ENCODE measurements at regions of chr19 and their contacts with region 1.

Region 1: GRCh38 chr19:14136509-14137281 is at the start of gene ASF1B:
- DNase-seq: peak; percentile 99
- ATAC-seq: peak; percentile 88
- H3K4me3 Mint-ChIP-seq: peak within 1 kb of the TSS; percentile 88
- H3K27ac Mint-ChIP-seq: peak within 1 kb of the TSS; percentile 93
- H3K4me1 Mint-ChIP-seq: peaks cover 43% of the 10 kb centered on the region
- H3K27me3 Mint-ChIP-seq: no peaks in the 10 kb centered on the region
- total RNA-seq, gene ASF1B: 64.6 to 70.4 TPM

Region 2: DNA sequence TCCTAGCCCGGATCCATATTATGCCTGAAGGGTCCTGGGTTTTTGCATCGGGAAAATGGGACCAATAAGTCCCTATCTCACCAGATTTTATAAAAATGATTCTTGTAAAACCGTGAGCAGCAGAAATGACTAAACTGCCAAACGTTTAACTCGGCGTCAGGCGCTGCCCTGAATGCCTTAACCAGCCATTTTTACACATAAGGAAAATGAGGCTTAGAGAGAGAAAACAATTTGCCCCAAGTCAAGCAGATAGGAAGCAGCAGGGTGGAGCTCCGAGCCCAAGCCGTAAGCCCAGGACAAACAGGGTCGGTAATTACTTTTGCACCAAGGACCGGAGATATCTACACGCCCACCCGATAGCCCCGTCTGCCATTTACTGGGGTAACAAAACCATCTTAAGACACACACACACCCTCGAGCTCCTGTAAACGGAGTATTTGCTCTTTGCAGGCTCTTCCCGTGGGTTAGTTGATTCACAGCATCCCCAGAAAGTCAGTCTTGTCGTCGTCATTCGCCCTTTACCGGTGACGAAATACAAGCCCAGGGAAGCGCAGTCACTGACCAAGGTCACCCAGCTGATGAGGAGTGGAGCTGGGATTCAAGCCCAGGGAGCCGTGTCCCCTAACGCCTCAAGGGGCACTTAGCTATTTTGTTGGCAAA is 388.4 kb before region 1 on chr19:
- CTCF ChIA-PET with region 1: interaction called, 5 read pairs
- POLR2A ChIA-PET with region 1: no interaction called
- intact Hi-C with region 1: loop called in 1 of 2 experiments (anchors 1 kb)
- DNase-seq: peak; percentile 50
- ATAC-seq: peak; percentile 2
- H3K4me3 Mint-ChIP-seq: peak overlapping the region; percentile 80
- H3K27ac Mint-ChIP-seq: peak overlapping the region; percentile 84
- H3K4me1 Mint-ChIP-seq: peaks cover 30% of the 10 kb centered on the region
- H3K27me3 Mint-ChIP-seq: no peaks in the 10 kb centered on the region

Region 3: DNA sequence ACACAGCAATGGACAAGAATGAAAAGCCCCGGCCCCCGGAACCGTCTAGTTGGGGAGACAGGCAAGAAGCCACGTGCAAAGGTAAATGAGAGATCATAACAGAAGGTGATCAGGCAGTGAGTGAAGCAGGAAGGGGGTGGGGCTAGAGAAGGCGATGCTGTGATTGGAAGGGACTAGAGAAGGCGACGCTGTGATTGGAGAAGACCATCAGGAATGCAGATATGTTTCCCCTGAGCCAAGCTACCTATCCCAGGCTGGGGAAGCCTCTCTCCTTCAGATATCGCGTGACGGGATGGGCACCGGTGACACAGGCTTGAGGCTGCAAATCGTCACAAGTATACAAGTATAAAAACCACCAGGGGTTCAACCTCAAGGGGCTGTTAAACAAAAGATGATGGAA is 162.6 kb before region 1 on chr19:
- CTCF ChIA-PET with region 1: no interaction called
- POLR2A ChIA-PET with region 1: no interaction called
- intact Hi-C with region 1: no loop called
- DNase-seq: peak; percentile 66
- ATAC-seq: peak; percentile 83
- H3K4me3 Mint-ChIP-seq: no peak overlapping the region
- H3K27ac Mint-ChIP-seq: peak overlapping the region; percentile 38
- H3K4me1 Mint-ChIP-seq: peaks cover 10% of the 10 kb centered on the region
- H3K27me3 Mint-ChIP-seq: no peaks in the 10 kb centered on the region

Region 4: GRCh38 chr19:13986348-13986904 is 150.3 kb before region 1 on chr19:
- CTCF ChIA-PET with region 1: no interaction called
- POLR2A ChIA-PET with region 1: no interaction called
- intact Hi-C with region 1: loop called in 1 of 2 experiments (anchors 1 kb)
- DNase-seq: peak; percentile 100
- ATAC-seq: peak; percentile 92
- H3K4me3 Mint-ChIP-seq: peak overlapping the region; percentile 63
- H3K27ac Mint-ChIP-seq: peak overlapping the region; percentile 97
- H3K4me1 Mint-ChIP-seq: peaks cover 65% of the 10 kb centered on the region
- H3K27me3 Mint-ChIP-seq: no peaks in the 10 kb centered on the region

Region 5: GRCh38 chr19:14117668-14118164 is 19.0 kb before region 1 on chr19 and contains the start of gene PRKACA:
- CTCF ChIA-PET with region 1: interaction called, 9 read pairs
- POLR2A ChIA-PET with region 1: interaction called, 8 read pairs
- intact Hi-C with region 1: loop called (anchors 1 kb)
- DNase-seq: peak; percentile 99
- ATAC-seq: peak; percentile 98
- H3K4me3 Mint-ChIP-seq: peak within 1 kb of the TSS; percentile 78
- H3K27ac Mint-ChIP-seq: peak within 1 kb of the TSS; percentile 77
- H3K4me1 Mint-ChIP-seq: peaks cover 41% of the 10 kb centered on the region
- H3K27me3 Mint-ChIP-seq: no peaks in the 10 kb centered on the region
- total RNA-seq, gene PRKACA: 58.1 to 68.7 TPM

Region 6: GRCh38 chr19:14405758-14406644 is 269.3 kb after region 1 on chr19:
- CTCF ChIA-PET with region 1: interaction called, 10 read pairs
- POLR2A ChIA-PET with region 1: interaction called, 13 read pairs
- intact Hi-C with region 1: loop called (anchors 1 to 2 kb)
- DNase-seq: peak; percentile 96
- ATAC-seq: peak; percentile 78
- H3K4me3 Mint-ChIP-seq: peak overlapping the region; percentile 12
- H3K27ac Mint-ChIP-seq: no peak overlapping the region
- H3K4me1 Mint-ChIP-seq: peaks cover 16% of the 10 kb centered on the region
- H3K27me3 Mint-ChIP-seq: no peaks in the 10 kb centered on the region

Region 7: GRCh38 chr19:14517840-14518505 is 381.3 kb after region 1 on chr19 and contains the start of gene DNAJB1:
- CTCF ChIA-PET with region 1: no interaction called
- POLR2A ChIA-PET with region 1: interaction called, 3 read pairs
- intact Hi-C with region 1: loop called in 1 of 2 experiments (anchors 1 kb)
- DNase-seq: peak; percentile 81
- ATAC-seq: peak; percentile 56
- H3K4me3 Mint-ChIP-seq: peak within 1 kb of the TSS; percentile 94
- H3K27ac Mint-ChIP-seq: peak within 1 kb of the TSS; percentile 94
- H3K4me1 Mint-ChIP-seq: peaks cover 60% of the 10 kb centered on the region
- H3K27me3 Mint-ChIP-seq: no peaks in the 10 kb centered on the region
- total RNA-seq, gene DNAJB1: 69.3 to 72.6 TPM

Measured in activated CD4-positive, alpha-beta T cell treated with anti-CD3 and anti-CD28 coated beads for 36 hours (primary cell).